ENCODE measurements at regions of chr11 and their contacts with region 1.

Region 1: DNA sequence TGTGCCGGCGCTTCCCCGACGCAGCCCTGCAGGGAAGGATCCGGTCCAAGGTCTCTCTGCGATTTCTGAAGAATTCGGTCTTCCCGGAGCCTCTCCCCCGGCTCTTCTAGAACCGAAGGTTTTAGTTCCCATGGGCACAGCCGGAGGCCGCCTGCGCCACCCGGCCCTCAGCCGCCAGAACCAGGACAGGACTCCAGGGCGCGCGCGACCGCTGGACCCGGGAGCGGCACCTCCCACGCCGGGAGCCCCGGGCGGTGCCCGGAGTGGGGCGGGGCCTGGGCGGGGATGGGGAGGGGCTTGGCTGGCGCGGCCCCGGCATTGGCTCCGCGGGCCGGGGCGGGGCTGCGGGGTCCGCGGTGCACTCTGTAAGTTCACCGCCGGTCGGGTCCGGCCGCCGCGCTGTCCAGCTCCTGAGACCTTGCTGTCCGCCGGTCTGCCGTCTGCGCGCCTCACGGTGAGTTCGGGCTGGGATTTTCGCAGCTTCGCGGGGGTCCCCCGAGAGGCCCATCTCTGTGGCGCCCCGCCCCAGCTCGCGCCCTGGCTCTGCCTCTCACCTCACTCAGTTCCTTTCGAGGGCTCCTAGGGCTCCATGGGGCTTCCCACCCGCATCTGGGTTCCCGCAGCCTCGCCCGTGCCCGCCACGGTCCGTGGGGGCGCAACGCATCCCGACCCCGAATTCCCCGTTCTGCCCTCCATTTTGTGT is at the start of gene CDC42EP2:
- H3K4me3 Mint-ChIP-seq: peak within 1 kb of the TSS; percentile 87
- H3K27ac Mint-ChIP-seq: peak within 1 kb of the TSS; percentile 88
- H3K4me1 Mint-ChIP-seq: peaks cover 64% of the 10 kb centered on the region
- H3K27me3 Mint-ChIP-seq: peaks cover 5% of the 10 kb centered on the region

Region 2: GRCh38 chr11:65290448-65291165 is 24.0 kb before region 1 on chr11:
- intact Hi-C with region 1: loop called (anchors 2 kb)
- H3K4me3 Mint-ChIP-seq: peak overlapping the region; percentile 51
- H3K27ac Mint-ChIP-seq: peak overlapping the region; percentile 90
- H3K4me1 Mint-ChIP-seq: peaks cover 48% of the 10 kb centered on the region
- H3K27me3 Mint-ChIP-seq: no peaks in the 10 kb centered on the region

Region 3: DNA sequence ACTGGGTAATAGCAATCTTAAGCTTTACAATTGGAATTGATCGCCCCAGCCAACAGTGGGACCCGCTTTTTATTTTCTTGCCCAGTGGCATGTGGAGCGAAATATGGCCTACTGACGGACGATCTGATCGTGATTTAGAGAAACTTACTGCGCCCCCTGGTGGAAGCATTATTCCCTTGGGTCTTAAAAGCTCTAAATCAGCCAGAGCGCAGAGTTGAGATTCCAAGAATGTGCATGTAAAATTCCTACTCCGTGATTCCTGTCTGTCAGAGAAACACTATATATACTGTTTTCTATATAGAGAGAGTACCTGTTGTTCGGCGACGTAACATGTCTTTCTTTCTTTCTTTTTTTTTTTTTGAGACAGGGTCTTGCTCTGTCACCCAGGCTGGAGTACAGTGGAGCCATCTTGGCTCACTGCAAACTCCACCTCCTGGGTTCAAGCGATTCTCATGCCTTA is 15.3 kb after region 1 on chr11:
- intact Hi-C with region 1: loop called (anchors 2 kb)
- H3K4me3 Mint-ChIP-seq: peak overlapping the region; percentile 48
- H3K27ac Mint-ChIP-seq: peak overlapping the region; percentile 84
- H3K4me1 Mint-ChIP-seq: peaks cover 20% of the 10 kb centered on the region
- H3K27me3 Mint-ChIP-seq: peaks cover 3% of the 10 kb centered on the region

Measured in dendritic cell treated with granulocyte-macrophage colony-stimulating factor and Interleukin-4, amounts not matched to agents 40 ng/mL and 50 ng/mL, for 4 days (primary cell).